ENCODE measurements at regions of chr6 and their contacts with region 1.

Region 1: DNA sequence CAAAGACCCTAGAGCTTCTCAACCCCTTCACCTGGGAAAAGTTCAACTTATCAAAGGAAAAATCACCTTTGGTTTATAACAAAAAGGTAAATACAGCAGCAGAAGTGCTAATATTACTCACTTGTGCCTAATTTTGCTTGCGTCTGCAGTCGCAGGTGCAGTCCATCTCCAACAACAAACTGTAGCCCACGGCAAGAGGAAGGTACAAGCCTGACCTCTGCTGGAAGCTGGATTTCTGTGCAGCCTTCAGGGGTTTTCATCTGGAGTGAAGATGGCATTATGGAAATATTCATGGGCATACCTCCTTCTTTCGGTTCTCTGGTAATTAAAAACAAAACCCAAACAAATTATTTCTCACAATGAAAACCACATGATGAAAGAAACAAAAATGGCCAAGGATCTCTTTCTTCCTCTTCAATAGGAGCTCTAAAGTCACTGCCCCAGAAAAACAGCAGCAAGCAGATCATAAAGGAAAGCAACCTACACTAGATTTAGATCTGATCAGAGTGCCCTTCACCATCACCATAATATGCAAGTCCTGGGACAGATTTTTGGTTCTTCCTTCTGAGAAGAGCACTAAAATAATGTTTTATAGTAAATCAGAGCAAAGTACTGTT is 7.8 kb downstream of the UBE3D start:
- DNase-seq: peak; percentile 40
- ATAC-seq: peak; percentile 65
- H3K4me3 Mint-ChIP-seq: no peak overlapping the region
- H3K27ac Mint-ChIP-seq: no peak overlapping the region
- H3K4me1 Mint-ChIP-seq: peaks cover 3% of the 10 kb centered on the region
- H3K27me3 Mint-ChIP-seq: no peaks in the 10 kb centered on the region

Region 2: DNA sequence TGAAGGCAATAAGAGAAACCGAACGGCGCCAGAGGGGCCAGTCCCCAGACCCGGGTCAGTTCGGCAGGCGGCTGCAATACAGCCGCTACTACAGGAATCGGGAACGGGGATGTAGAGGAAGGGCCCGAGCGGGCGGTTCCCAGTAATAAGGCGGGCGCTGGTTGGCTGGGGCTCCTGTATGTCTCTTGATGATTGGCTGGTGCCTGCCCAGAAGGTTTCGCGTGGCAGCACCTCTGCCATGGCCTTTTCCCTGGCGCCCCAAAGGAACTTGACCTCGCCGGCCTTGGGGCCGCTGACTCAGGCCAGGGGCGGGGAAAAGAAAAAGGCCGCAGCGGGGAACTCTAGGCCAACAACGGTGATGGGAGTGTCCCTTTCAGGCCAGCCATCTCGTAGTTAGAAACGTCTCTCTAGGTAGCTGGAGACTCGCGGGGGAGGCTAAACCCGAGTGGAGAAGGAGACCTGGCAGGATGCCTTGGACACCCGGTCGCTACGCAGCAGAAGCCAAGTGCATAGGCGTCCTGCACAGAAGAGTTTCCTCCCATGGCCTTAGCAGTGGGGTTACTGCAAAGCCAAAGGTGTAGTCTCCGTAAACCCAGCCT is 810.1 kb before region 1 on chr6 and contains the start of gene IBTK:
- CTCF ChIA-PET with region 1: no interaction called
- POLR2A ChIA-PET with region 1: no interaction called
- intact Hi-C with region 1: loop called in 1 of 2 experiments (anchors 1 kb)
- DNase-seq: peak; percentile 92
- ATAC-seq: peak; percentile 87
- H3K4me3 Mint-ChIP-seq: peak within 1 kb of the TSS; percentile 97
- H3K27ac Mint-ChIP-seq: peak within 1 kb of the TSS; percentile 93
- H3K4me1 Mint-ChIP-seq: peaks cover 34% of the 10 kb centered on the region
- H3K27me3 Mint-ChIP-seq: no peaks in the 10 kb centered on the region
- total RNA-seq, gene IBTK: 28.6 to 29.5 TPM

Region 3: DNA sequence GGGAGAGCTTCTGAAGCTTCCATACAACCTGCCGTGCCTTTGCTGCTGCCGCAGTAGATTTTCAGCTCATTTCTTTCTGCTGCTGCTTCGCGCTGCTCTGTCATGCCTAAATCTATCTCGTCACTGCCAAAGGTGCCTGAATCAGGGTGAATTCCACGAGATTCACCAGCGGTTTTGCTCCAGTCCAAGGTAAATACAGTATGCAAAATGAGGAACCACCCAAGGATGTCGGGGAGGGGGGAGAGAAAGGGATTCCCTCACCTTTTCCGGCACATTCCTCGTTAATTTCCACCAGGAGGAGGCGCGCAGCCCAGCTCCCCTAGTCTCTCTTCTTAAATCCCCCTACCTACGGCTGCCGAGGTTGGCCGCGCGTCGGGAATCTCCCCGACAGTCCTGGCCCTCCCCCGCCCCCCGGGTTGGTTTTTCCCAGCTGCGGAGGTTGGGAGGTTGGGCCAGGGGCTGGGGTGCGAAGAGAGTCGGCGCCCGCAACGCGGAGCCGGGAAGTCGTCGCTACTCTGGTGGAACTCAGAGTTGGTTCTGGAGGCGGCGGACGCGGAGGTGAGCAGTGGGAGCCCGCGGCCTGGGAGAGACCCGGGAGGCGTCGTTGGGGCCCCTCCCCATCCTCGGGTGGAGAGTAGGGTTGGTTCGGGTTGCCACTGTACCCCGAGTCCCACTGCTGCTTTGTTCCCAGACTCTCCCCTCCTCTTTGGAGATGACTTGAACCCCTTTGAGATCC is 694.3 kb before region 1 on chr6 and contains the start of gene TPBG:
- CTCF ChIA-PET with region 1: interaction called, 4 read pairs
- POLR2A ChIA-PET with region 1: no interaction called
- intact Hi-C with region 1: loop called in 1 of 2 experiments (anchors 10 kb)
- DNase-seq: peak; percentile 52
- ATAC-seq: peak; percentile 63
- H3K4me3 Mint-ChIP-seq: peak within 1 kb of the TSS; percentile 74
- H3K27ac Mint-ChIP-seq: no peak within 1 kb of the TSS
- H3K4me1 Mint-ChIP-seq: peaks cover 17% of the 10 kb centered on the region
- H3K27me3 Mint-ChIP-seq: peaks cover 51% of the 10 kb centered on the region
- total RNA-seq, gene TPBG: 0.33 to 0.43 TPM

Measured in activated CD4-positive, alpha-beta T cell treated with anti-CD3 and anti-CD28 coated beads for 36 hours (primary cell).